Left cardiac atrium (tissue), 4 donors: ENCODE measurements at regions of chr15 and their contacts with region 1.

Region 1: GRCh38 chr15:85564686-85565085 is 184.3 kb downstream of the AKAP13 start:
- DNase-seq: no peak
- ATAC-seq: peak; percentile 41 to 83

Region 2: DNA sequence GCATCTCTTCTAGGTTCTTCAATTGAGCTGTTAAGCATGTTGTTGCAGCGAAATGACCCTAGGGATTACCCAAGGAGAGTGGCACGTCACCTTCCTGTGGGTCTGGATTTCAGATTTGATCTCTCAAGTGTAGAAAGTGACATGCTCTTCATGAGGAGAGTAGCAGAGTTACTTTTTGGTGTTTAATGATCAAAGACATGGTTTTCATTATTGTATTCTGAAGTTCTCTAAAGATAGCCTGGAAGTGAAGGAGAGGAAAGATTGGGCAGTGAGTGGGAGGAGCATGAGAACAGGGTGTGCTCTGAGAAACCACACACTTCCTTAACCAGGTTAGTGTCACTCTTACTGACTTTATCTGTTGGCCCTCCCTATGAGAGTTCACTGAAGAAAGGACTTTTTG is 30.7 kb before region 1 on chr15:
- intact Hi-C with region 1: loop called in 1 of 2 experiments (anchors 5 kb)
- DNase-seq: no peak
- ATAC-seq: peak in 1 of 2 donors; percentile 47